Ascending aorta (tissue), 2 donors: ENCODE measurements at regions of chr10 and their contacts with region 1.

Region 1: GRCh38 chr10:30836406-30836805 is 195.3 kb downstream of the ZNF438 start:
- DNase-seq: no peak
- H3K4me3 ChIP-seq: no peak overlapping the region
- H3K27ac ChIP-seq: no peak overlapping the region
- H3K4me1 ChIP-seq: peaks cover 0 to 3% of the 10 kb centered on the region in 2 donors
- H3K27me3 ChIP-seq: no peaks in the 10 kb centered on the region
- CTCF ChIP-seq: no peak

Region 2: GRCh38 chr10:30803892-30804322 is 32.5 kb before region 1 on chr10:
- intact Hi-C with region 1: loop called (anchors 2 kb)
- DNase-seq: peak in 1 of 2 donors; percentile 76
- H3K4me3 ChIP-seq: no peak overlapping the region
- H3K27ac ChIP-seq: no peak overlapping the region
- H3K4me1 ChIP-seq: peaks cover 0 to 5% of the 10 kb centered on the region in 2 donors
- H3K27me3 ChIP-seq: no peaks in the 10 kb centered on the region
- CTCF ChIP-seq: no peak